ENCODE measurements at regions of chr5 and their contacts with region 1.

Region 1: GRCh38 chr5:56814963-56815658 is at the start of gene MAP3K1:
- DNase-seq: peak; percentile 71
- H3K4me3 ChIP-seq: peak within 1 kb of the TSS; percentile 83 to 94 (median 85)
- H3K27ac ChIP-seq: peak within 1 kb of the TSS; percentile 47
- H3K4me1 ChIP-seq: peaks cover 19% of the 10 kb centered on the region
- H3K27me3 ChIP-seq: peaks cover 0 to 3% of the 10 kb centered on the region in 2 experiments
- CTCF ChIP-seq: peak in 1 of 2 donors; percentile 1
- POLR2A ChIP-seq: no peak
- total RNA-seq, gene MAP3K1: 12.5 and 14.4 TPM in 2 replicates

Region 2: DNA sequence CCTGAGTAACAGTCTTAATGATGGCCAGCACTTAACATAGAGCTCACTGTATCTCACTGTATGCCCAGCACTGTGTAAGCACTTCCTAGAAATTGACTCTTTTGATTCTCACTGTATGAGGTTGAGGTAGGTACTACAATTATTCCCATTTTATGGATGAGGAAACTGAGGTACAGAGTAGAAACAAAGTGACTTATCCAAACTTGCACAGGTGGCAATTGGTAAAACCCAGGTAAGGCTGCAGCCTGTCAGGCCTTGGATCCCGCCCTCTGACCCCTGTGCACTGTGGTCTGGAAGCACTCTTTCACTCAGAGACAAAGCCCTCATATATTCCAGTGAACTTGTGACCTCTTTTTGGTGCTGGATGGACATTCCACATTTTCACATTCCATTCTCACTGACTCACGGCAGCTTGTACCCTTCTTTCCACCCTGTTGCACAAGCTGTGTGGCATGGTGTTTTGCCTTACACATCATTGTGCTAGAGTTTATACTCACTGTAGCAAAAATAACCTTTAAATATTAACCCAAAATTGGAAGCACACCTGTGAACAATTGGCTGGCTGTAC is 603.7 kb before region 1 on chr5:
- CTCF ChIA-PET with region 1: no interaction called
- POLR2A ChIA-PET with region 1: no interaction called
- dilution Hi-C with region 1: no loop called
- intact Hi-C with region 1: loop called (anchors 5 kb)
- DNase-seq: peak; percentile 86
- H3K4me3 ChIP-seq: no peak overlapping the region
- H3K27ac ChIP-seq: peak overlapping the region; percentile 83
- H3K4me1 ChIP-seq: peaks cover 43% of the 10 kb centered on the region
- H3K27me3 ChIP-seq: no peaks in the 10 kb centered on the region
- CTCF ChIP-seq: no peak
- POLR2A ChIP-seq: no peak

Region 3: DNA sequence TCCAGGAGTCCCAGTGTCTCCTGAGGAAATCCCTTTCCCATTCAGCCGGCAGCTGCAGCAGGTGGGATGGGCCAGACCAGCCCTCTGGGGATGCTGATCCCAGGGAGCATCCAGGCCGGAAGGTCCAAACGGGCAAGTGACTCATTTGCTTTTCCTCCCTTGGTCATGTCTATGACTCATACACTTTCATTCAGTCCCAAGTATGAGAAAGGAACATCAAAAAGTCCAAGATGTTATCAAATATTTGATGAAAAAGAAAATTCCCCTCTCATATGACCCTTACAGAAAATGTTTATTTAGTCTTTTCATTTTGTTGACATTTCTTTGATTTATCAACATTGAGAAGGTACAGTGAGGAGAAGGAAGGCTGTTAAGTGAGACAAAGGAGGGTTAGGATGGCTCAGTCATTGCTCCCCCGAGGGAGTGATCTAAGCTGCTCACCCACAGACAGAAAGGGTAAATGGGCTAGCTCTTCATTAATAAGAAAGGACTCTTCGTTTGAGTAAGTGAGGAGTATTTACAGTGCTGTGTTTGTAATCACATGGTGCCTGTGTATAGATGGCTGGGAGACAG is 464.4 kb before region 1 on chr5:
- CTCF ChIA-PET with region 1: no interaction called
- POLR2A ChIA-PET with region 1: no interaction called
- dilution Hi-C with region 1: no loop called
- intact Hi-C with region 1: loop called (anchors 2 kb)
- DNase-seq: peak; percentile 98
- H3K4me3 ChIP-seq: no peak overlapping the region
- H3K27ac ChIP-seq: peak overlapping the region; percentile 92
- H3K4me1 ChIP-seq: peaks cover 28% of the 10 kb centered on the region
- H3K27me3 ChIP-seq: no peaks in the 10 kb centered on the region
- CTCF ChIP-seq: no peak
- POLR2A ChIP-seq: no peak

Region 4: GRCh38 chr5:56909294-56910209 is 94.4 kb after region 1 on chr5 and contains the start of gene SETD9:
- CTCF ChIA-PET with region 1: interaction called, 3 read pairs
- POLR2A ChIA-PET with region 1: no interaction called
- dilution Hi-C with region 1: no loop called
- intact Hi-C with region 1: loop called (anchors 2 kb)
- DNase-seq: peak; percentile 98
- H3K4me3 ChIP-seq: peak within 1 kb of the TSS; percentile 36 to 81 (median 63)
- H3K27ac ChIP-seq: peak within 1 kb of the TSS; percentile 93
- H3K4me1 ChIP-seq: peaks cover 9% of the 10 kb centered on the region
- H3K27me3 ChIP-seq: peaks cover 0 to 3% of the 10 kb centered on the region in 2 experiments
- CTCF ChIP-seq: no peak
- POLR2A ChIP-seq: peak; percentile 97
- total RNA-seq, gene SETD9: 3.6 and 7.1 TPM in 2 replicates

Region 5: GRCh38 chr5:57173185-57174127 is 358.3 kb after region 1 on chr5 and contains the start of gene GPBP1:
- CTCF ChIA-PET with region 1: no interaction called
- POLR2A ChIA-PET with region 1: no interaction called
- dilution Hi-C with region 1: no loop called
- intact Hi-C with region 1: loop called (anchors 5 kb)
- DNase-seq: peak; percentile 99
- H3K4me3 ChIP-seq: peak within 1 kb of the TSS; percentile 77 to 96 (median 86)
- H3K27ac ChIP-seq: peak within 1 kb of the TSS; percentile 94
- H3K4me1 ChIP-seq: peaks cover 32% of the 10 kb centered on the region
- H3K27me3 ChIP-seq: no peaks in the 10 kb centered on the region
- CTCF ChIP-seq: peak in 1 of 2 donors; percentile 1
- POLR2A ChIP-seq: no peak
- total RNA-seq, gene GPBP1: 48.2 and 57.4 TPM in 2 replicates

Measured in endothelial cell of umbilical vein (primary cell).